PC-9 (cell line): ENCODE measurements at regions of chr3 and their contacts with region 1.

Region 1: DNA sequence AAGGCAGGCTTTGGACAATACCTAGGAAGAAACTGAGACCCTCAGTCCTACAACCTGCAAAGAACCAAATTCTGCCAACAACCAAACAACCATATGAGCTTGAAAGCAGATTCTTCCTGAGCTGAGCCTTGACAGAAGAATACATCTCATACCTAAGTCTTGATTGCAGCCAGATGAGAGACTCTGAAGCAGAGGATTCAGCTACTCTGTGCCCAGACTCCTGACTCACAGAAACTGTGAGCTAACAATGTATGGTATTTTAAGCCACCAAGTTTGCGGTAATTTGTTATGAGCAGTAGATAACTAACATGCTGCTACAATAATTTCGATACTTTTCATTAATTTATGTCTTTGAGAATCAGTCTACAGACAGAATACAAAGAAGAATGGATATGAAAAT is 325.1 kb upstream of the CBLB start:
- DNase-seq: no peak
- H3K4me3 ChIP-seq: no peak overlapping the region
- H3K27ac ChIP-seq: no peak overlapping the region
- H3K4me1 ChIP-seq: no peaks in the 10 kb centered on the region
- H3K27me3 ChIP-seq: no peaks in the 10 kb centered on the region
- CTCF ChIP-seq: no peak

Region 2: DNA sequence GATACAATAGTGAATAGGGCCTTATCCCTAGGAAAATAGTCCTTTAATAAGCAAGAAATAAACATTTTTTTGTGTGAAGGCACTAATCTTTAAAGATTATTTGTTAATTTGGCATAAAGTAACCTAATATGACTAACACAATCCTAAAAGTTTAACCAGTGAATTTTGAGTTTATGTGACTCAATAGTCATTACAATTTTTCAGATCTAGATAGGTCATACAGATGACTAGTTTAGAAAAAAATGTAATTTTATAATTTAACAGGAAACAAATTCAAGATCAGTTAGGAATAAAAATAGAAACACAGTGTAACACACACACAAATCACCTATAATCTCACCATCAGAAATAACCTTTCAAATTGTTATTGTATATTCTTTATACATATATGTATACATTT is 1447.8 kb before region 1 on chr3:
- CTCF ChIA-PET with region 1: no interaction called
- POLR2A ChIA-PET with region 1: interaction called, 18 read pairs
- intact Hi-C with region 1: no loop called
- DNase-seq: peak in 1 of 2 experiments; percentile 4
- H3K4me3 ChIP-seq: no peak overlapping the region
- H3K27ac ChIP-seq: no peak overlapping the region
- H3K4me1 ChIP-seq: no peaks in the 10 kb centered on the region
- H3K27me3 ChIP-seq: no peaks in the 10 kb centered on the region
- CTCF ChIP-seq: no peak

Region 3: GRCh38 chr3:106058475-106058874 is 135.4 kb before region 1 on chr3:
- CTCF ChIA-PET with region 1: no interaction called
- POLR2A ChIA-PET with region 1: no interaction called
- intact Hi-C with region 1: no loop called
- DNase-seq: no peak
- H3K4me3 ChIP-seq: no peak overlapping the region
- H3K27ac ChIP-seq: no peak overlapping the region
- H3K4me1 ChIP-seq: no peaks in the 10 kb centered on the region
- H3K27me3 ChIP-seq: no peaks in the 10 kb centered on the region
- CTCF ChIP-seq: no peak